ENCODE measurements at regions of chr10 and their contacts with region 1.

Region 1: GRCh38 chr10:47090903-47091302 is 179.7 kb downstream of the PTPN20 start:
- DNase-seq: no peak
- ATAC-seq: no peak
- H3K4me3 ChIP-seq: no peak overlapping the region
- H3K27ac ChIP-seq: no peak overlapping the region
- H3K4me1 ChIP-seq: no peaks in the 10 kb centered on the region
- H3K27me3 ChIP-seq: no peaks in the 10 kb centered on the region
- CTCF ChIP-seq: no peak

Region 2: GRCh38 chr10:47101807-47102206 is 10.9 kb after region 1 on chr10:
- CTCF ChIA-PET with region 1: no interaction called
- POLR2A ChIA-PET with region 1: no interaction called
- in situ Hi-C with region 1: no loop called
- intact Hi-C with region 1: loop called (anchors 1 kb)
- DNase-seq: no peak
- ATAC-seq: no peak
- H3K4me3 ChIP-seq: no peak overlapping the region
- H3K27ac ChIP-seq: no peak overlapping the region
- H3K4me1 ChIP-seq: no peaks in the 10 kb centered on the region
- H3K27me3 ChIP-seq: no peaks in the 10 kb centered on the region; the same call in 1 of the 2 replicates
- CTCF ChIP-seq: no peak

Region 3: GRCh38 chr10:47182934-47183703 is 92.2 kb after region 1 on chr10:
- CTCF ChIA-PET with region 1: no interaction called
- POLR2A ChIA-PET with region 1: interaction called, 18 read pairs
- in situ Hi-C with region 1: no loop called
- intact Hi-C with region 1: no loop called
- DNase-seq: no peak
- ATAC-seq: no peak
- H3K4me3 ChIP-seq: no peak overlapping the region
- H3K27ac ChIP-seq: no peak overlapping the region
- H3K4me1 ChIP-seq: no peaks in the 10 kb centered on the region
- H3K27me3 ChIP-seq: no peaks in the 10 kb centered on the region
- CTCF ChIP-seq: no peak

Measured in Panc1 (cell line).